Endothelial cell of umbilical vein (primary cell): ENCODE measurements at regions of chr21 and their contacts with region 1.

Region 1: GRCh38 chr21:26814374-26814773 is 30.8 kb downstream of the ADAMTS1 start:
- DNase-seq: no peak
- H3K4me3 ChIP-seq: no peak overlapping the region
- H3K27ac ChIP-seq: no peak overlapping the region
- H3K4me1 ChIP-seq: no peaks in the 10 kb centered on the region
- H3K27me3 ChIP-seq: peaks cover 2% of the 10 kb centered on the region in 2 experiments
- CTCF ChIP-seq: no peak
- POLR2A ChIP-seq: no peak

Region 2: DNA sequence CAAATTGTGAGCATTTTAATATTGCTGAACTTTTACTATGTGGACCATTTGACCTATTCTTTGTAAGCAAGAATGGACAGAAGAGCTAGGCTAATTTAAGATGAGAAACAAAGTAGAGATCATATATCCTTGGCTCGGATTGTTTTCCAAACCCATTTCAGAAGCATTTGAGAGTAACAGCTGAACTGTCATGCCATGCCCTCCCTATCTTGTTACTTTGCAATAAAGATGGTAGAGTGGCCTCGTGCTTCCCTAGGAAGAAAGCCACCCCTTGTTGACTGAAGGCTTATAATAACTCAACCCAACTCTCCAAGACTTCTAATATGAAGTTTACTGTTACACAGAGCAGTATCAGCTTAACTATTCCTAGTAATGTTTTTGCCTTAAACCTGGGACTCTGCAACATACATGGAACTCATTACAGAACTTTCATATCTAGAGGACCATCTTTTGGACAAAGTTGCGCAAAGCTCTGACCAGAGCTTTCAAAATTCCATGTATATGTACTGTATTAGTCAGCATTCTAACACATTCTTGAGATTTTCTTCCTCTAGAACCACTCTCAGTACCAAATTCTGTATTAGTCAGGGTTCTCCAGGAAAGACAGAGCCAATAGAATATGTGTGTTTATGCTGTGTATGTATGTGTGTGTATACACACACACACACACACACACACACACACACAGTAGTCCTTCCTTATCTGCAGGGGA is 37.9 kb before region 1 on chr21:
- CTCF ChIA-PET with region 1: interaction called, 6 read pairs
- POLR2A ChIA-PET with region 1: no interaction called
- dilution Hi-C with region 1: no loop called
- intact Hi-C with region 1: loop called (anchors 5 kb)
- DNase-seq: no peak
- H3K4me3 ChIP-seq: no peak overlapping the region
- H3K27ac ChIP-seq: no peak overlapping the region
- H3K4me1 ChIP-seq: no peaks in the 10 kb centered on the region
- H3K27me3 ChIP-seq: peaks cover 2 to 4% of the 10 kb centered on the region in 2 experiments
- CTCF ChIP-seq: no peak
- POLR2A ChIP-seq: no peak

Region 3: GRCh38 chr21:26826801-26827200 is 12.4 kb after region 1 on chr21:
- CTCF ChIA-PET with region 1: interaction called, 43 read pairs
- POLR2A ChIA-PET with region 1: no interaction called
- dilution Hi-C with region 1: no loop called
- intact Hi-C with region 1: no loop called
- DNase-seq: no peak
- H3K4me3 ChIP-seq: no peak overlapping the region
- H3K27ac ChIP-seq: no peak overlapping the region
- H3K4me1 ChIP-seq: no peaks in the 10 kb centered on the region
- H3K27me3 ChIP-seq: peaks cover 5 to 14% of the 10 kb centered on the region in 2 experiments
- CTCF ChIP-seq: no peak
- POLR2A ChIP-seq: no peak

Region 4: GRCh38 chr21:27257908-27258556 is 443.7 kb after region 1 on chr21:
- CTCF ChIA-PET with region 1: no interaction called
- POLR2A ChIA-PET with region 1: no interaction called
- dilution Hi-C with region 1: no loop called
- intact Hi-C with region 1: no loop called
- DNase-seq: no peak
- H3K4me3 ChIP-seq: no peak overlapping the region
- H3K27ac ChIP-seq: no peak overlapping the region
- H3K4me1 ChIP-seq: no peaks in the 10 kb centered on the region
- H3K27me3 ChIP-seq: no peaks in the 10 kb centered on the region
- CTCF ChIP-seq: no peak
- POLR2A ChIP-seq: no peak